GM13977 (cell line): ENCODE measurements at regions of chr7 and their contacts with region 1.

Region 1: DNA sequence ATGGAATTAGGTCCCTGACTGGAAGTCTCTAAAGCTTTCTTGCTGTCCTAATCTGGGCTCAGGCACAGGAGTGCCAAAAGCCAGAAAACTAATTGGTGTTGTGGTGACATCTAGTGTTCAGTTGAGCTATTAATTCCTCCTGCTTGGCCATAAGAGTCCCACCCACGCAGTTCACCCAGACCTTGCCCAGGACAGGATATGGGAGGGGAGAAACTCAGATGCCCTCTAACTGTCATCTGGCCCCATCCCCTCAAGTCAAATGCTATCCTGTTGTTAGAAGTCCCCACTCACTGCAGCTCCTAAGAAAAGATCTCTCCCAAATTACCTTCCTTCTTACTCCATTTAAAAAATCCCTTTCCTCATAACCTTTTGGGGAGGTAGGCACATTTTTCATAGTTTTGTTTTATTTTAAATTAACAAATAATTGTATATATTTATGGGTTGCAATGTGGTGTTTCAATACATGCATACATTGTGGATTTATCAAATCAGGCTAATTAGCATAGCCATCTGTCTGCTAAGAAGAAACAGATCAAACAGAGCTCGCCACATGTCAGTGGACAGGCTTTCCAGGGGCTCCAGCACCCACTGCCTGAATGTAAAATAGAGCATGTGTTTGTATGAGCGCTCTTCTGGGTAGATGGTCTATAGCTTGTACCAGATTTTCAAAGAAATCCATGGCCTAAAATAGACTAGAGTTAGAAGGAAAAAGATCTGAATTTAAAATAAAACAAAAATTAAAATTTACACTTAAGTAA is 84.0 kb downstream of the GSAP start:
- DNase-seq: peak; percentile 75
- CTCF ChIP-seq: peak; percentile 69

Region 2: DNA sequence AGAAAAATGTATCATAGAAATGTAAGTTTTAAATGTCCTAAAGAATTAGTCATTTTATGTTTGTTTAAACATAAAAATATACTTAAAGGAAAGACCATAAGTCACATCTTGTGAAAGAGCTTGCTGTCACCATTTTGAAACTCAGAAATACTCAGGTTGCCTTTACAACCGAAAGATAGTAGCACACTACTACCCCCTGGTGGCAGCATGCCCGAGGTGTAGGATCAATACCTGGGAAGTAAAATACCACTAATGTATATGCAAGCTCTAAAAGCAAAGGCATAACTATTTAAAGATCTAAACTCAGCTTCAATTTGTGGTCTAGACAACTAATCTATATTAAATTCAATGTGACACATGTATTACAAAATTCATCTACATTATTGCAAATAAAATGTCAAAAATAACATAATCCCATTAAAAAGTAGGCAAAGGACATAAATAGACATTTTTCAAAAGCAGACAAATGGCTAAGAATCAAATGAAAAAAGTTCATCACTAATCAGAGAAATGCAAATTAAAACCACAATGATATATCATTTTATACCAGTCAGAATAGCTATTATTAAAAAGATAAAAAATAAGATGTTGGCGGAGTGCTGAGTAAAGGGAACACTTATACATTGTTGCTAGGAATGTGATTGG is 84.8 kb before region 1 on chr7:
- in situ Hi-C with region 1: loop called (anchors 5 kb)
- DNase-seq: peak; percentile 73
- CTCF ChIP-seq: peak; percentile 70